BJ (cell line): ENCODE measurements at regions of chr3 and their contacts with region 1.

Region 1: DNA sequence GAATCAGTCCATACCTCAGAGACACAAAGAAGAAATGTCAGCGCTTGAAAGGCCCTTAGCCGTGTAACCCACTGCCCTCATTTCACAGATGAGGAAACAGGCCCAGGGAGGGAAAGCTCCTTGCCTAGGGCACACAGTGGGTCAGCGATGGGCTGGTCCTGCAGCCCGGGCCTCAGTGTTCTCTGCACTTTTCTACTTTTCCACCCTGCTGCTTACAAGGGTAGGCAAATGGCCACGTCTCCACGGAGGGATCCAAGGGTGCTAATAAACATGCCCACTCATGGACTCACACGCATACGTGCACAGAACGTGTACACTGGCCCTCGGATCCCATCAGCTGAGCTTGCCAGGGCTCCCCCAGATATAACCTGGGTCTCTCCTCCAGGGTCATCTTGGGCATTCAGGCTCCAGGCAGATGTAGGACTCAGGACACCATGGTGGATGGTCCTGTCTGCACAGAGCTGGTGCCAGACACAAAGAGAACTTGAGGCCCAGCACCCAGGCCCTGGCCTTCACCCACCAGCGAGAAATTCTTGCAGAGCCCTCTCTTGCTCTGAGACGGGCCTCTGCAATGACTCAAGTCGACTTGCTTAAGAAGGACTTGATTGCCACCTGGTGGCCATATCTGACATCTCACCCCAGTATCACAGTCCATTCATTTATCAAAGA is 34.5 kb upstream of the VPS8 start:
- DNase-seq: peak; percentile 50
- H3K4me3 ChIP-seq: no peak overlapping the region
- H3K27me3 ChIP-seq: peaks cover 3% of the 10 kb centered on the region
- CTCF ChIP-seq: peak; percentile 72

Region 2: DNA sequence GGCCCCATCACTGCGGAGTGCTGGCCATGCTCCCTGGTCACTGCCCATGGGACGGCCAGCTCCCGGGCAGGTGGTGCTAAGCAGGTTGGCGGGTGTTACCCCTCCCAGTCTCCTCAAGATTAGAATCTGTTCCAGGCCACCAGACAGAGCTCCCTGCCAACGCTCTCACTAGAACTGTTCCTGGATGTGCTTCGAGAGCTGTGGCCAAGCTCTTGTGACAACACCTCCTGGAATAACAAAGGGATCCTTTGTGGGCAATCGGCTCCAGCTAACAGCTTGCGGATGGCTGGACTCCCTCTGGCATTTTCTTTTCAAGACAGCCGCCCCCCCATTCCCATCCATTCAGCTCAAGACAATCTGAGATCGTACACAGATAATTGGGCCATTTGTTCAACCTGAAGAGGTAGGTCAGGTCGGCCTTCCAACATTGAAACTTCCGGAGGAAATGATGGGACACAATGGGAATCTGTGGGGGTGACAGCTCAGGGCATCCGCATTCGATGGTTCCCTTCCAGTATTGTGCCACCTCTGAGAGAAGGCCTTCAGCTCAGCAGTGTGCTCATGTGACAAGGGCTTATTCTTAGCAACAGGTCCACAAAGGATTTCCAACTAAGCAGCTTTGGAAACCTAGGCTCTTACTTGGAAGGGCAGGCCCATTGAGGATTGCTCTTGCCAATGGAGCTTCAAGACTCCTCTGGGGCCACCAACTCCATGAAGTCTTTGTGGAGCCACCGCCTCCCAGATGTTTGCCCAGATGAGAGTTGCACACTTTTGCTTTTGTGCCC is 227.5 kb before region 1 on chr3:
- CTCF ChIA-PET with region 1: interaction called, 21 read pairs
- POLR2A ChIA-PET with region 1: no interaction called
- DNase-seq: no peak
- H3K4me3 ChIP-seq: no peak overlapping the region
- H3K27me3 ChIP-seq: peaks cover 10% of the 10 kb centered on the region
- CTCF ChIP-seq: no peak

Region 3: DNA sequence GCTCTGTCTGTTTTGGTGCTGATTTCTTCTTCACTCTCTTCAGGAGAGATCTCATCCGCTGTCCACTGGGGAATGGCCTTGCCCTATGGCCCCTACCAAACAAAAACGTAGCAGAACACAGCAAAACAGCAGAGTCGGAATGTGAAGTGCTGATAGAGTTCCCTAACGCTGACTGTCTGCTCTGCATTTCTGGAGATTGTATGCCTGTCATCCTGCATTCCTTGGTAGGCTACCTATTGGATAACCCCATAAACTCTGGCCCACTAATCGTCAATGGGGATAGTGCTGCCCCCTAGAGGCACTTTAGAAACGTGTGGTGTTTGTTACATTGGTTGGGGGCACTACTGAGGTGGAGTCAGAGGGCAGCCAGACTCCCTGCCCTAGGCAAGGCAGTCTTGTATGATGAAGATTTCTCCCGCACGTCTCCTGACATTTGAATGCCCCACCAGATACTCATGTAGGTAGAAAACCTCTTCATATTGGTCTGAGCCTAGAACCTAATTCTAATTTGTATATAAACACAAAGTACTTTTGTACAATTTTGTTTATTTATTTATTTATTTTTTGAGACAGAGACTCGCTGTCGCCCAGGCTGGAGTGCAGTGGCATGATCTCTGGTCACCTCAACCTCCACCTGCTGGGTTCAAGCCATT is 50.0 kb before region 1 on chr3:
- CTCF ChIA-PET with region 1: interaction called, 12 read pairs
- POLR2A ChIA-PET with region 1: no interaction called
- DNase-seq: no peak
- H3K4me3 ChIP-seq: no peak overlapping the region
- H3K27me3 ChIP-seq: peaks cover 4% of the 10 kb centered on the region; the same call in 1 of the 2 replicates
- CTCF ChIP-seq: peak; percentile 80

Region 4: GRCh38 chr3:184757022-184757651 is 20.3 kb before region 1 on chr3:
- CTCF ChIA-PET with region 1: interaction called, 21 read pairs
- POLR2A ChIA-PET with region 1: no interaction called
- DNase-seq: no peak
- H3K4me3 ChIP-seq: no peak overlapping the region
- H3K27me3 ChIP-seq: peaks cover 1% of the 10 kb centered on the region
- CTCF ChIP-seq: no peak